OCI-LY7 (cell line): ENCODE measurements at regions of chr19 and their contacts with region 1.

Region 1: DNA sequence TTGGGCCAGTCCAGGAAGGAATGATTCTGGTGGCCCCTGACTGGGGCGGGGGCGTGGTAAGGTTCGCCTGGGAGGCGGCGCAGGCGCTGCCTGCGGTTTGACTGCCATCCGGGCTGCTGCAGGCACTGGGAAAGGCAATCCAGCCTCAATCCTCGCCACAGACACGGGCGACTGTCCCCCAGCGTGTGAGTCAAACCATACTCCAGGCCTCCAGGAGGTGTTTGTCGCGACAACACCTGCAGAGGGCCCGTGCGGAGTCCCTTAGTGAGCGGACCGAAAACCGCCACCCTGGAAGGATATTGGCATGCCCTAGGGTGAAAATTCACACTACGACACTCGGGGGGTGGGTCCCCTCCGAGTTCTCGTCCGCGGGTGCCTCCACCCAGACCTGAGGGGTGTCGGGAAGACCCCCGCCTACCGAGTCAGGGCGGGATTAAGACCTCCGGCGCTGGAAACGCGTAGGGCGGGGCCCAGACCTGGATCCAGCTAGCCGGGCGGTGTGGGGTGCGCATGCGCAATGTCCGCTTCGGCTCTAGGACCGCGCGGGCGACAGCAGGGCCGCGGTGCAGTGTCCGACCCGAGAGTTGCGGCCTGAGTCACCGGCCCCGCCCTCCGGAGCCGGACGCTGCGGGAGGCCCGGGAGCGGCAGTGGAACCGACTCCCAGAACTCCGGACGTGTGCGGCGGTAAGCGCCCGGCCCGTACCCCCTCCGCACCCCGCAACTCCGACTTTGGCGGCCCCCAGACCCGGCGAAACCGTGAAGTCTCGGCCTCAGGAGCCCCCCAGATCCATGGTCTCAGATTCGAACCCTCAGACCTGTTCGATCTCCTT is at the start of gene CAPNS1:
- DNase-seq: peak; percentile 98
- H3K4me3 ChIP-seq: peak within 1 kb of the TSS; percentile 89
- H3K27ac ChIP-seq: peak within 1 kb of the TSS; percentile 81
- H3K4me1 ChIP-seq: peaks cover 9% of the 10 kb centered on the region
- CTCF ChIP-seq: 0 out of 2 replicates have a peak, but pooled peaks have one; percentile 24
- total RNA-seq, gene CAPNS1: 125 and 166 TPM in 2 replicates

Region 2: DNA sequence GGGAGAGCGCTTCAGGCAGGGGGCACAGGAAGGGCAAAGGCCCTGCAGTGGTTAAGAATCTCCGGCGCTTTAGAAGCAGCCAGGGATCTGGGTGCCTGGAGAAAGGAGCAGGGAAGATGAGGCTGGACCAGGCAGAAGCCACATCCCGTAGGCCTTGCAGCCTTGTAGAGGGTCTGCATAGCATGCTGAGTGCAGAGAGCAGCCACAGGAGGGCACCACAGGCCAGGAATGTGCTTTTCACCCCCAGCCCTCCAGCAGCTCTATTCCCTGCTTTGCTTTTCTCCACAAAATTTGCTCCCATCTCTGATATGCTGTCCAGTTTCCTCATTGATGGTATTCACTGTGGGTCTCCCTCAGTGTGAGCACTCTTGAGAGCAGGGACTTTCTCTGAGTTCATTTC is 79.3 kb before region 1 on chr19:
- CTCF ChIA-PET with region 1: no interaction called
- POLR2A ChIA-PET with region 1: no interaction called
- intact Hi-C with region 1: no loop called
- DNase-seq: peak; percentile 36
- H3K4me3 ChIP-seq: no peak overlapping the region
- H3K27ac ChIP-seq: no peak overlapping the region
- H3K4me1 ChIP-seq: peaks cover 27% of the 10 kb centered on the region
- CTCF ChIP-seq: peak; percentile 67

Region 3: GRCh38 chr19:36160821-36161596 is 21.3 kb after region 1 on chr19:
- CTCF ChIA-PET with region 1: no interaction called
- POLR2A ChIA-PET with region 1: no interaction called
- intact Hi-C with region 1: no loop called
- DNase-seq: no peak
- H3K4me3 ChIP-seq: no peak overlapping the region
- H3K27ac ChIP-seq: no peak overlapping the region
- H3K4me1 ChIP-seq: no peaks in the 10 kb centered on the region
- CTCF ChIP-seq: no peak

Region 4: DNA sequence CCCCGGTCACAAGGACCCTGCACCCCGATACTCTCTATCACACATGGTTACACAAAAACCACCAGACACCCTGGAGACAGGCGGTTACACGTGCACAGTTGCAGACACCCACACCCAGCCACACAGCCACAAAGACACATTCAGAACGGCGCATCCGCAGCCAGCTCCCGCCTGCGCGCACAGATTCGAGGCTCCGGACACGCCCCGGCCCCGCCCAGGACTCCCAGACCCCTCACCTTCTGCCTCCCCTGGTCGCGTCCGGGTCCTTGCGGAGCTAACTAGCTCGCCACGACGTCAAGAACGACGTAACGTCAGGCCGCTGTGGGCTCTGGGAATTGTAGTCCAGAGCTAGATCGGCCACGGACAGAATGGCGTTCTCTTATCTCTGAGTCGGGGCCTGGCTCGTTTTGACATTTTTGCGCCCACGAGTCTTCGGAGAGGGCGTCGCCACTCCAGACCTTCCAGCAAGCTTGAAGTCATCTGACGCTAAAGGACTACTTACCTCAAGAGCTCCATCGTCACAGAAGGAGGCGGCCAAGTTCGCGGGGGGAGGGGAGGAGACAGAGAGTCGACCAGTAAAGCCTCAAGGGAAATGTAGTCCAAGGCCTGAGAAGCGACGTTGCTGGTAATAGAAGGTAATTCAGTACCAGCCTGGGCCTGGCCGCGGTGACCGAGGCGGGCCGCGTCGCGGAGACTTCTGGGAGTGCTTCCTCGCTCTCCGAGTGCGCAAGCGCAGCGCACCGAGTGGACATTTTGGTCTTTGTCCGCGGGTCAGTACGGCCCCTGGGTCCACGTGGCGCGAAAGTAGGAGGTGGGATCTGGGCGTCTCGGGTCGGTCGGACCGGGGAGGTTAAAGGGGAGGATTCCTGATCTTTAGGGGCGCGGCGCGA is 74.9 kb after region 1 on chr19 and contains the starts of genes ZNF146 and ZNF565:
- CTCF ChIA-PET with region 1: no interaction called
- POLR2A ChIA-PET with region 1: no interaction called
- intact Hi-C with region 1: loop called (anchors 2 kb)
- DNase-seq: peak; percentile 100
- H3K4me3 ChIP-seq: peak within 1 kb of the TSS; percentile 76
- H3K27ac ChIP-seq: peak within 1 kb of the TSS; percentile 71
- H3K4me1 ChIP-seq: peaks cover 21% of the 10 kb centered on the region
- CTCF ChIP-seq: no peak
- total RNA-seq, gene ZNF146: 67.4 and 69.4 TPM in 2 replicates
- total RNA-seq, gene ZNF565: 2.1 and 2.8 TPM in 2 replicates

Region 5: GRCh38 chr19:36436531-36436930 is 296.8 kb after region 1 on chr19:
- CTCF ChIA-PET with region 1: no interaction called
- POLR2A ChIA-PET with region 1: no interaction called
- intact Hi-C with region 1: no loop called
- DNase-seq: peak; percentile 39
- H3K4me3 ChIP-seq: no peak overlapping the region
- H3K27ac ChIP-seq: no peak overlapping the region
- H3K4me1 ChIP-seq: no peaks in the 10 kb centered on the region
- CTCF ChIP-seq: no peak